Gastrocnemius medialis (tissue), 4 donors: ENCODE measurements at regions of chr6 and their contacts with region 1.

Region 1: GRCh38 chr6:18264219-18264922 is at the start of gene DEK:
- DNase-seq: peak; percentile 80 to 83
- ATAC-seq: peak; percentile 90 to 92
- H3K4me3 ChIP-seq: peak within 1 kb of the TSS; percentile 76 to 98 (median 90)
- H3K27ac ChIP-seq: peak within 1 kb of the TSS; percentile 86 to 100 (median 96)
- H3K4me1 ChIP-seq: peaks cover 34 to 38% of the 10 kb centered on the region in 2 donors
- H3K27me3 ChIP-seq: no peaks in the 10 kb centered on the region
- CTCF ChIP-seq: peak; percentile 51 to 83 (median 60)
- POLR2A ChIP-seq: peak; percentile 54 to 58
- total RNA-seq, gene DEK: 60.5 to 134 (median 105) TPM

Region 2: GRCh38 chr6:18155150-18155863 is 109.1 kb before region 1 on chr6 and contains the start of gene KDM1B:
- in situ Hi-C with region 1: no loop called
- intact Hi-C with region 1: loop called (anchors 2 kb)
- DNase-seq: peak; percentile 98 to 99
- ATAC-seq: peak; percentile 87 to 93
- H3K4me3 ChIP-seq: peak within 1 kb of the TSS; percentile 84 to 95 (median 86)
- H3K27ac ChIP-seq: peak within 1 kb of the TSS; percentile 82 to 94 (median 92)
- H3K4me1 ChIP-seq: peaks cover 14 to 19% of the 10 kb centered on the region in 2 donors
- H3K27me3 ChIP-seq: no peaks in the 10 kb centered on the region
- CTCF ChIP-seq: no peak
- POLR2A ChIP-seq: peak; percentile 91 to 94
- total RNA-seq, gene KDM1B: 14.5 to 29.9 (median 26.0) TPM

Region 3: DNA sequence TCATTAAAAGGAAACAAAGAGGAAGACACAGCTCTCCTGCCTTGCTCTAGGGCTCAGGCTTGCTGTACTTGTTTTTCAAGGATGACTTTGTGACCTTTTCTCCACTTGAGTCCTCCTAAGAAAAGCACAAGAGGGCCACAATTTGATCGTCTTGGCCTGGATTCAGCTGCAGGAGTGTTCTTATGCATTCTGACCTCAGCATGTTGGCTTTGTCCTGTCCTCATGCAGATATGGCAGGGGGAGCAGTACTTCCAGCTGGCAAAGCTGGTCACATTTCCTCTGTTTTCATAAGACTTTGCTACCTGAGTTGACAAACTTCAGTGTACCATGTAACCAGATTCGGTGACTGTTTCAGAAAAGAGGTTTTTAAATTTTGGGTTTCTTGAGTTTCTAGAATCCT is 78.3 kb before region 1 on chr6:
- in situ Hi-C with region 1: no loop called
- intact Hi-C with region 1: no loop called
- DNase-seq: no peak
- ATAC-seq: no peak
- H3K4me3 ChIP-seq: no peak overlapping the region
- H3K27ac ChIP-seq: no peak overlapping the region
- H3K4me1 ChIP-seq: no peaks in the 10 kb centered on the region
- H3K27me3 ChIP-seq: no peaks in the 10 kb centered on the region
- CTCF ChIP-seq: no peak
- POLR2A ChIP-seq: no peak

Region 4: DNA sequence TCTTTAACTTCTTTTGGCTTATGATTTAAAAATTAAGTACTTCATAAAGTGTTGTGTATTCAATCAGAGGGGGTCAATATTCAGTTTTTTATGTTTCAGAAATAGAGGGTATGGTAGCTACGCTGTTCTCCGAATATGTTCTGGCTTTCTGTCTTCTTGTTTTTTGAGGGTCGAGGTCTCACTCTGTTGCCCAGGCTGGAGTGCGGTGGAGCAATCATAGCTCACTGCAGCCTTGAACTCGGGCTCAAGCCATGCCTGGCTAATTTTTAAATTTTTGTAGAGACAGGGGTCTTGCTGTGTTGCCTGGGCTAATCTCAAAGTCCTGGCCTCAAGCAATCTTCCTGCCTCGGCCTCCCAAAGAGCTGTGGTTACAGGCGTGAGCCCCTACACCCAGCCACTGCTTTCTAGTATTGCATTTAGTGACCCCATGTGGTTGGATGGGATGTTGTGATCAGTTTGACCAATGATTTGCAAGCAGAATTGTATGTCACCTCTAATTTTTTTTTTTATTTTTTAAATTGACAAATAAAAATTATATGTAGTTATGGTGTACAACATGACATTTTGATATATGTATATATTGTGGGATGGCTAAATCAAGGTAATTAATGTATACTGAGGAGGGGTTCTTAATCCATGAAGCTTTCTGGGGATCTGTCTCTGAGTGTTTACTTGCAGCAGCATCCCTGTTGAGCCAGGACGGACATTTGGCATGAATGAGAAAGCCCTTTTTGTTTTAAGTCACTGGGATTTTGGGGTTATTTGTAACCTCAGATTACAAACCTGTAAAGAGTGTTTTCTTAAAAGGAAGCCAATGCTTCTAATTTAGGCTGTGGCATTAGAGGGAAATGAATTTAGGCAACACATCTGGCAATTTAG is 38.4 kb after region 1 on chr6:
- in situ Hi-C with region 1: no loop called
- intact Hi-C with region 1: loop called (anchors 2 kb)
- DNase-seq: peak in 1 of 2 donors; percentile 23
- ATAC-seq: peak; percentile 58 to 91
- H3K4me3 ChIP-seq: no peak overlapping the region
- H3K27ac ChIP-seq: peak overlapping the region in 1 of 4 donors; percentile 43
- H3K4me1 ChIP-seq: peaks cover 10 to 15% of the 10 kb centered on the region in 2 donors
- H3K27me3 ChIP-seq: no peaks in the 10 kb centered on the region
- CTCF ChIP-seq: peak in 3 of 5 experiments; percentile 17 to 42 (median 25)
- POLR2A ChIP-seq: no peak

Region 5: DNA sequence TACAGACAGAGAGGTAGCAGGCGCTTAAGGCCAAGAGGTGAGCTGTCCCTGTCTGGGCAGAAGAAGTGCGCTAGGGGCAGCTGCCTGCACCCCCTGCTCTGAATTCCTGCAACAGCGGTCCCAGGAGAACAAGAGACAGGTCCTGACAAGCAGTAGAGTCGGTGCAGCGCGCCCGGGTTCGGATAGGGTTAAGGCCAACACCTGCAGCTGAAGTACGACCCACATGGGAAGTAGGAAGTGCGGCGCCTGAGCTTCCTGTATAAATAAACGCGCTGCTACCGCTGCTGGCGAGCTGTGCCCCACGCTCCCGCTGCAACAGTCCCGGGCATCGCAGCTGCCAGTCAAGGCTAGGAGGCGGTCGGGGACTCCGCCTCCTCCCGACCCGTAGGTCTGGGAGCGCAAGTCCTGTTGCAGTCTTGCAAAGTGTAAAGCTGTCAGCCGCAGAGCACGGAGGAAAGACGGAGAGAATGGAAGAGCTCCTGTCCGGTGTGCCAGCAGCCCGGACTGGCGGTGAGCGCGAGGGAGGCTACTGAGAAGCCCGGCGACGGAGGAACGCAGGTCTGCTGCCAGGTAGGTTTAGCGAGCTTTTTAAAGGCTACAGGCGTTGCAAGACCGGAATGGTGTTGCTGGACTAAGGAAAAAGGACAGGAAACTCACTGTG is 122.8 kb after region 1 on chr6 and contains the start of gene RNF144B:
- in situ Hi-C with region 1: no loop called
- intact Hi-C with region 1: loop called (anchors 2 kb)
- DNase-seq: peak; percentile 91 to 94
- ATAC-seq: peak; percentile 83 to 85
- H3K4me3 ChIP-seq: peak within 1 kb of the TSS; percentile 60 to 71 (median 63)
- H3K27ac ChIP-seq: peak within 1 kb of the TSS; percentile 87 to 92 (median 90)
- H3K4me1 ChIP-seq: peaks cover 36 to 44% of the 10 kb centered on the region in 2 donors
- H3K27me3 ChIP-seq: no peaks in the 10 kb centered on the region
- CTCF ChIP-seq: peak in 1 of 5 experiments; percentile 15
- POLR2A ChIP-seq: peak; percentile 75 to 91
- total RNA-seq, gene RNF144B: 8.4 to 47.0 (median 31.9) TPM